ENCODE measurements at regions of chr13 and their contacts with region 1.

Region 1: DNA sequence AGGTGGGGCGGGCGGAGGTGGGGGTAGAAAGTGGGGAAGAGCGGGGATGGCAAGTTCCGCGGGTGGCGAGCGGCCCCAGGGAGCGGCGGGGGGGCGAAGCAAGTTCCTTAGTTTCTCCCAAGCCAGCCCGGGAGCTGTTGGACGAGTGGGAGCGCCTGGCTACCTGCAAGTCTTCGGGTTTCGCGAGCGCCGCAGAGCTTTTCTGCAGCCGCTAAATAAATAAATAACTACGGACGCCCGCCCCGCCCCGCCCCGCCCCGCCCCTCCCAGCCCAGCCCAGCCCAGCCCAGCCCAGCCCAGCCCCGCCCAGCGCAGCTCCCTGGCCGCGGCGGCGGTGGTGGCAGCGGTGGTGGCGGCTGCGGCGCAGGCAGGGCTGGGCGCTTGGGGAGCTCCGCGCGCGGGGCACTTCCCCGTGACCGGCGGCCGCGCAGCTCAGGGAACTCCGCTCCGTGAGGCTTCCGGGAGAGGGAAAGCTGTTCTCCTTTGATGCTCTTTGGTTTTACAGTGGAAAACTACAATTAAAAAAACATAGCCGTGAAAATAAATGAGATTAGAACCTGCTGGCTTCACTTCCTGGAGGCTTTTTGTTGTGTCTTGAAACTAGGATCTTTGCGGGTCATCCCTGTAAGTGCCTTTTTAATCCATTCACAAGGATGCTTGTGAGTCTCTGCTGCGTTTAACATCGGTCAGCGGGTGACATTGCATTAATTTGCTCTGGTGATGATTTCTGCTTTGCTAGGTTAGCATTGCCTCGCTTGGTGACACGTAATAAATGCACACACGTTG is at the start of gene UBE2L5:
- DNase-seq: peak; percentile 85
- ATAC-seq: peak; percentile 93
- H3K4me3 ChIP-seq: peak within 1 kb of the TSS; percentile 57 to 83 (median 77)
- H3K4me3 Mint-ChIP-seq: peak within 1 kb of the TSS; percentile 92
- H3K27ac ChIP-seq: peak within 1 kb of the TSS; percentile 45 to 71
- H3K27ac Mint-ChIP-seq: peak within 1 kb of the TSS; percentile 90
- H3K4me1 ChIP-seq: peaks cover 18 to 42% of the 10 kb centered on the region in 2 donors
- H3K4me1 Mint-ChIP-seq: peaks cover 47% of the 10 kb centered on the region
- H3K27me3 ChIP-seq: no peaks in the 10 kb centered on the region
- H3K27me3 Mint-ChIP-seq: no peaks in the 10 kb centered on the region
- CTCF ChIP-seq: no peak
- total RNA-seq, gene UBE2L5: 0.57 and 0.58 TPM in 2 replicates

Region 2: DNA sequence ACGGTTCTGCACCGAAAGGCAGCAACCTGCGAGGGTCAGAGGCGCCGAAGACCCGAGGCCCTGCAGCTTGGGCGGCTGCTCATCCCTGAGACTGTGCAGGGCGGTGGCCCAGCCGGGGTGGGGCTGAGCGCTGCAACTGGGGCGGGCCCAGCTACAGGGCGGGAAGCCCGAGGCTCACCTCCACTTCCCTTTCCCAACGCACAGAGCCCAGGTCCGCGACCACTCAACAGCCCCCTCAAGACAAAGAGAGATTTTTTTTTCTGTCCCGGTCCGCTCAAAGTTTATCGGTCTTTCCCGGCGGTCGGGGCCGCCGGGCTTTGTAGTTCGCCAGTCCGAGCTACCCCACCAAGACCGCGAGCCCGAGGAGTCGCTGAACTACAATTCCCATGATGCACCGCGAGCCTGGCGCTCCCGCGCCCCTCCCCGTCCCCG is 115.5 kb before region 1 on chr13:
- CTCF ChIA-PET with region 1: no interaction called
- POLR2A ChIA-PET with region 1: no interaction called
- intact Hi-C with region 1: loop called (anchors 1 kb)
- DNase-seq: peak; percentile 96
- ATAC-seq: peak; percentile 89
- H3K4me3 ChIP-seq: peak overlapping the region; percentile 70 to 97 (median 83)
- H3K4me3 Mint-ChIP-seq: peak overlapping the region; percentile 85
- H3K27ac ChIP-seq: peak overlapping the region; percentile 71 to 87
- H3K27ac Mint-ChIP-seq: peak overlapping the region; percentile 86
- H3K4me1 ChIP-seq: peaks cover 28 to 45% of the 10 kb centered on the region in 2 donors
- H3K4me1 Mint-ChIP-seq: peaks cover 55% of the 10 kb centered on the region
- H3K27me3 ChIP-seq: no peaks in the 10 kb centered on the region
- H3K27me3 Mint-ChIP-seq: no peaks in the 10 kb centered on the region
- CTCF ChIP-seq: no peak

Region 3: GRCh38 chr13:30395192-30396084 is 26.8 kb before region 1 on chr13:
- CTCF ChIA-PET with region 1: no interaction called
- POLR2A ChIA-PET with region 1: interaction called, 8 read pairs
- intact Hi-C with region 1: loop called (anchors 1 kb)
- DNase-seq: peak; percentile 86
- ATAC-seq: peak; percentile 79
- H3K4me3 ChIP-seq: peak overlapping the region; percentile 62 to 96 (median 77)
- H3K4me3 Mint-ChIP-seq: peak overlapping the region; percentile 98
- H3K27ac ChIP-seq: peak overlapping the region; percentile 92
- H3K27ac Mint-ChIP-seq: peak overlapping the region; percentile 99
- H3K4me1 ChIP-seq: peaks cover 10 to 15% of the 10 kb centered on the region in 2 donors
- H3K4me1 Mint-ChIP-seq: peaks cover 24% of the 10 kb centered on the region
- H3K27me3 ChIP-seq: no peaks in the 10 kb centered on the region
- H3K27me3 Mint-ChIP-seq: no peaks in the 10 kb centered on the region
- CTCF ChIP-seq: no peak

Region 4: GRCh38 chr13:30493658-30494381 is 71.6 kb after region 1 on chr13:
- CTCF ChIA-PET with region 1: no interaction called
- POLR2A ChIA-PET with region 1: no interaction called
- intact Hi-C with region 1: no loop called
- DNase-seq: no peak
- ATAC-seq: no peak
- H3K4me3 ChIP-seq: no peak overlapping the region
- H3K4me3 Mint-ChIP-seq: no peak overlapping the region
- H3K27ac ChIP-seq: no peak overlapping the region
- H3K27ac Mint-ChIP-seq: no peak overlapping the region
- H3K4me1 ChIP-seq: no peaks in the 10 kb centered on the region
- H3K4me1 Mint-ChIP-seq: no peaks in the 10 kb centered on the region
- H3K27me3 ChIP-seq: no peaks in the 10 kb centered on the region
- H3K27me3 Mint-ChIP-seq: no peaks in the 10 kb centered on the region
- CTCF ChIP-seq: no peak

Region 5: DNA sequence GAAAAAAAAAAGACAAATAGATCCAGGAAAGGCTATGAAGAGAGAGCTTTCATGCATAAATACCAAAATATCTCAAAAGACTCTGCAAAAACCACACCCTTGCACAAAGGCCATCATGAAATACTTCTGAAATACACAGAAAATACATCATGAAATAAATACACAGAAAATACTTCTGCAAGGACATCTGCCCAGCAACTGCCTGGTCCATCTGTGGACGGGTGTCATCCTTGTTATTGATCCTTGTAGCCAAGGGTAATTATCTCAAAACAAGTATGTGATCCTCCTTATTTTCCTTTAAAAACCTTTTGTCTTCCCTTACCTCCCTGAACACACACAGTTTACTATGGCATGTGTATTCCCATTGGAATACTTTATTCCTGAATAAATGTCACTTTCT is 202.4 kb after region 1 on chr13:
- CTCF ChIA-PET with region 1: no interaction called
- POLR2A ChIA-PET with region 1: no interaction called
- intact Hi-C with region 1: no loop called
- DNase-seq: no peak
- ATAC-seq: no peak
- H3K4me3 ChIP-seq: no peak overlapping the region
- H3K4me3 Mint-ChIP-seq: no peak overlapping the region
- H3K27ac ChIP-seq: peak overlapping the region in 1 of 2 donors; percentile 28
- H3K27ac Mint-ChIP-seq: no peak overlapping the region
- H3K4me1 ChIP-seq: peaks cover 25 to 34% of the 10 kb centered on the region in 2 donors
- H3K4me1 Mint-ChIP-seq: peaks cover 49% of the 10 kb centered on the region
- H3K27me3 ChIP-seq: no peaks in the 10 kb centered on the region
- H3K27me3 Mint-ChIP-seq: no peaks in the 10 kb centered on the region
- CTCF ChIP-seq: no peak

Region 6: GRCh38 chr13:30774214-30774730 is 352.0 kb after region 1 on chr13:
- CTCF ChIA-PET with region 1: no interaction called
- POLR2A ChIA-PET with region 1: no interaction called
- intact Hi-C with region 1: no loop called
- DNase-seq: no peak
- ATAC-seq: no peak
- H3K4me3 ChIP-seq: no peak overlapping the region
- H3K4me3 Mint-ChIP-seq: no peak overlapping the region
- H3K27ac ChIP-seq: no peak overlapping the region
- H3K27ac Mint-ChIP-seq: no peak overlapping the region
- H3K4me1 ChIP-seq: peaks cover 5 to 6% of the 10 kb centered on the region in 2 donors
- H3K4me1 Mint-ChIP-seq: peaks cover 8% of the 10 kb centered on the region
- H3K27me3 ChIP-seq: no peaks in the 10 kb centered on the region
- H3K27me3 Mint-ChIP-seq: no peaks in the 10 kb centered on the region
- CTCF ChIP-seq: no peak

Measured in B cell (primary cell).